CD8-positive, alpha-beta T cell (primary cell): ENCODE measurements at regions of chr5 and their contacts with region 1.

Region 1: DNA sequence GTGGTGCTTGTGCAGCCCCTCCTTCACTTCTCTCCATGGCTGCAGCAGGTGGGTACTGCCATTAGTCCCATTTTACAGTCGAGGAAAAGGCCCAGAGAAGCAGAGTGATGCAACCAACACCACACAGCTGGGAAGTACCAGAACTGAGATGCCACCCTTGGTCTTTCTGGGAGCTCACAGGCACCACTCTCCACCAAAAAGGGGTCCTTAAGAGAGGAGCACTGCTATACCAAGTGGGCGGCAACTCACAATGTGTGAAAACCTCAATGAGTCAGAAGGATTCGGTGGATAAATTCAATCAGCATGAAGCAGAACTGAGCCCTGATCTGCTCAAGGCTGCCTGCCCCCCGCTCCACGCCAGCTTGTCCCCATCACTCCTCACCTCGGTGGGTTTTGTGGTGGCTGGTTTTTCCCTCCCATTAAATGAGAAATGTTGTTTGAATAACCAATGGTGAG is 213.7 kb downstream of the FSTL4 start:
- DNase-seq: peak in 2 of 9 experiments; percentile 16 to 37
- ATAC-seq: no peak
- H3K4me3 ChIP-seq: no peak overlapping the region
- H3K4me3 Mint-ChIP-seq: no peak overlapping the region
- H3K27ac ChIP-seq: no peak overlapping the region
- H3K27ac Mint-ChIP-seq: no peak overlapping the region
- H3K4me1 ChIP-seq: peaks cover 7% of the 10 kb centered on the region
- H3K4me1 Mint-ChIP-seq: peaks cover 23% of the 10 kb centered on the region
- H3K27me3 ChIP-seq: no peaks in the 10 kb centered on the region
- H3K27me3 Mint-ChIP-seq: peaks cover 4% of the 10 kb centered on the region
- CTCF ChIP-seq: no peak

Region 2: GRCh38 chr5:133433641-133434040 is 35.0 kb after region 1 on chr5:
- CTCF ChIA-PET with region 1: no interaction called
- POLR2A ChIA-PET with region 1: no interaction called
- intact Hi-C with region 1: no loop called
- DNase-seq: no peak
- ATAC-seq: no peak
- H3K4me3 ChIP-seq: no peak overlapping the region
- H3K4me3 Mint-ChIP-seq: no peak overlapping the region
- H3K27ac ChIP-seq: no peak overlapping the region
- H3K27ac Mint-ChIP-seq: no peak overlapping the region
- H3K4me1 ChIP-seq: no peaks in the 10 kb centered on the region
- H3K4me1 Mint-ChIP-seq: no peaks in the 10 kb centered on the region
- H3K27me3 ChIP-seq: no peaks in the 10 kb centered on the region
- H3K27me3 Mint-ChIP-seq: peaks cover 2% of the 10 kb centered on the region
- CTCF ChIP-seq: no peak

Region 3: GRCh38 chr5:133499895-133500294 is 101.2 kb after region 1 on chr5:
- CTCF ChIA-PET with region 1: no interaction called
- POLR2A ChIA-PET with region 1: no interaction called
- intact Hi-C with region 1: loop called in 1 of 2 experiments (anchors 5 kb)
- DNase-seq: no peak
- ATAC-seq: no peak
- H3K4me3 ChIP-seq: no peak overlapping the region
- H3K4me3 Mint-ChIP-seq: no peak overlapping the region
- H3K27ac ChIP-seq: no peak overlapping the region
- H3K27ac Mint-ChIP-seq: no peak overlapping the region
- H3K4me1 ChIP-seq: no peaks in the 10 kb centered on the region
- H3K4me1 Mint-ChIP-seq: no peaks in the 10 kb centered on the region
- H3K27me3 ChIP-seq: no peaks in the 10 kb centered on the region
- H3K27me3 Mint-ChIP-seq: peaks cover 6% of the 10 kb centered on the region
- CTCF ChIP-seq: no peak

Region 4: GRCh38 chr5:135246923-135247795 is 1848.5 kb after region 1 on chr5:
- CTCF ChIA-PET with region 1: no interaction called
- POLR2A ChIA-PET with region 1: no interaction called
- intact Hi-C with region 1: no loop called
- DNase-seq: peak in 1 of 9 experiments; percentile 39
- ATAC-seq: no peak
- H3K4me3 ChIP-seq: no peak overlapping the region
- H3K4me3 Mint-ChIP-seq: no peak overlapping the region
- H3K27ac ChIP-seq: no peak overlapping the region
- H3K27ac Mint-ChIP-seq: no peak overlapping the region
- H3K4me1 ChIP-seq: no peaks in the 10 kb centered on the region
- H3K4me1 Mint-ChIP-seq: no peaks in the 10 kb centered on the region
- H3K27me3 ChIP-seq: no peaks in the 10 kb centered on the region
- H3K27me3 Mint-ChIP-seq: peaks cover 4% of the 10 kb centered on the region
- CTCF ChIP-seq: no peak